Dorsolateral prefrontal cortex (tissue), 120 donors: ENCODE measurements at regions of chr21 and their contacts with region 1.

Region 1: DNA sequence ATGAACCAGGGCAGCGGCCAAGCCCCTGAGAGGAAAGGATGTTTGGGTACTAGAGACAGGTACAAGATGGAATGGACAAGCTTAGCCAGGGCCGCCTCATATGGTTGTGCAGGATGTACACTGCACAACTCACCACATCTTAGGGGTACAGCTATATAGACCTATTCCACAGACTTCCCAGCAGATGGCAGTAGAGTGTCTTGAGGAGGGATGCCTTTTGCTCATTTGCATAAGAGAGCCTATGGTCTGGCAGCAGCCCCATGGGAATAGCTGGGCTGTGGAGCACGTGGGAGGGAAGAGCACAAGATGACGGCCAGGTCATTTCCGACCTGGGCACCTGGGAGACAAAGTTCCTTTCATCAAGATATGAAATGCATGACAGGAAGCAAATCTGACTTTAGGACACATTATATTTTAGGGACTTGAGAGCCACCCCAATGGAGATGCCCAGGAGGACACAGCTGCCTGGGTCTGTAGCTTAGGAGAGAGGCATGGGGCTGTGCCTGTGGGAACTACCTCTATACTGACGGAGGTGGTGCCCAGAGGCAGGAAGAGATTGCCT is 215.5 kb downstream of the KCNJ6 start:
- DNase-seq: peak in 3 of 10 donors; percentile 38 to 43 (median 40)
- H3K4me3 ChIP-seq: no peak overlapping the region
- H3K27ac ChIP-seq: no peak overlapping the region
- H3K27me3 ChIP-seq: peaks cover 0 to 16% (median 0%) of the 10 kb centered on the region in 45 donors
- CTCF ChIP-seq: peak; percentile 43 to 79 (median 70)

Region 2: GRCh38 chr21:36773117-36773516 is 927.6 kb before region 1 on chr21:
- intact Hi-C with region 1: no loop called
- DNase-seq: peak in 1 of 10 donors; percentile 92
- H3K4me3 ChIP-seq: no peak overlapping the region
- H3K27ac ChIP-seq: peak overlapping the region in 18 of 59 donors; percentile 1 to 64 (median 39)
- H3K27me3 ChIP-seq: no peaks in the 10 kb centered on the region
- CTCF ChIP-seq: no peak

Region 3: GRCh38 chr21:37909932-37910331 is 209.2 kb after region 1 on chr21:
- intact Hi-C with region 1: loop called in 1 of 2 experiments (anchors 5 kb)
- DNase-seq: no peak
- H3K4me3 ChIP-seq: no peak overlapping the region
- H3K27ac ChIP-seq: no peak overlapping the region
- H3K27me3 ChIP-seq: peaks cover 0 to 36% (median 6%) of the 10 kb centered on the region in 45 donors
- CTCF ChIP-seq: peak in 2 of 56 donors; percentile 3 to 10

Region 4: GRCh38 chr21:38126669-38127303 is 426.1 kb after region 1 on chr21:
- intact Hi-C with region 1: loop called (anchors 5 to 10 kb)
- DNase-seq: peak in 7 of 10 donors; percentile 36 to 59 (median 52)
- H3K4me3 ChIP-seq: no peak overlapping the region
- H3K27ac ChIP-seq: no peak overlapping the region
- H3K27me3 ChIP-seq: peaks cover 0 to 29% (median 3%) of the 10 kb centered on the region in 45 donors
- CTCF ChIP-seq: peak; percentile 42 to 76 (median 64)